Aorta (tissue), 5 donors: ENCODE measurements at regions of chr9 and their contacts with region 1.

Region 1: DNA sequence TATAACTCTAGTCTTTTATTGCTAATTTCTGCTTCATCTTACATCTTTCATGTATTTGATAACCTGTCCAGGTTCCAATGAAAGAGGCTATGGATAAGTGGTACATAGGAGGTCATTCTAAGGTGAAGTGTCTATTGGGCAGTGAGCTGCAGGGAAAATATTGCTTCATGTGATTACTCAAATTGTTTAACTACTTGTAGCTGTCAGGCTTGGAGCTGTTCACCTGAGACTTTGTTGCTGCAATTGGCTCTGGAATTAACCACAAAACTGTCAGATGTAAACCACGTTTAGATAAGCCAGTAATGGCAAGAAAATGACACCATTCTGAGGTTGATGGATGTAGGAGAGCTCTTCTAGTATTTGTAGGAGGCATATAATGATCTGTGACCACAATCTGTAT is 26.0 kb downstream of the ADAMTSL1 start:
- DNase-seq: no peak
- ATAC-seq: no peak
- H3K4me3 ChIP-seq: no peak overlapping the region
- H3K27ac ChIP-seq: no peak overlapping the region
- H3K4me1 ChIP-seq: peaks cover 0 to 4% of the 10 kb centered on the region in 2 donors
- H3K27me3 ChIP-seq: no peaks in the 10 kb centered on the region

Region 2: GRCh38 chr9:18543406-18544192 is 43.6 kb after region 1 on chr9:
- intact Hi-C with region 1: loop called in 1 of 2 experiments (anchors 5 kb)
- DNase-seq: peak; percentile 44 to 79
- ATAC-seq: no peak
- H3K4me3 ChIP-seq: no peak overlapping the region
- H3K27ac ChIP-seq: peak overlapping the region; percentile 47 to 77
- H3K4me1 ChIP-seq: peaks cover 1 to 6% of the 10 kb centered on the region in 2 donors
- H3K27me3 ChIP-seq: no peaks in the 10 kb centered on the region